ENCODE measurements at regions of chr7 and their contacts with region 1.

Region 1: DNA sequence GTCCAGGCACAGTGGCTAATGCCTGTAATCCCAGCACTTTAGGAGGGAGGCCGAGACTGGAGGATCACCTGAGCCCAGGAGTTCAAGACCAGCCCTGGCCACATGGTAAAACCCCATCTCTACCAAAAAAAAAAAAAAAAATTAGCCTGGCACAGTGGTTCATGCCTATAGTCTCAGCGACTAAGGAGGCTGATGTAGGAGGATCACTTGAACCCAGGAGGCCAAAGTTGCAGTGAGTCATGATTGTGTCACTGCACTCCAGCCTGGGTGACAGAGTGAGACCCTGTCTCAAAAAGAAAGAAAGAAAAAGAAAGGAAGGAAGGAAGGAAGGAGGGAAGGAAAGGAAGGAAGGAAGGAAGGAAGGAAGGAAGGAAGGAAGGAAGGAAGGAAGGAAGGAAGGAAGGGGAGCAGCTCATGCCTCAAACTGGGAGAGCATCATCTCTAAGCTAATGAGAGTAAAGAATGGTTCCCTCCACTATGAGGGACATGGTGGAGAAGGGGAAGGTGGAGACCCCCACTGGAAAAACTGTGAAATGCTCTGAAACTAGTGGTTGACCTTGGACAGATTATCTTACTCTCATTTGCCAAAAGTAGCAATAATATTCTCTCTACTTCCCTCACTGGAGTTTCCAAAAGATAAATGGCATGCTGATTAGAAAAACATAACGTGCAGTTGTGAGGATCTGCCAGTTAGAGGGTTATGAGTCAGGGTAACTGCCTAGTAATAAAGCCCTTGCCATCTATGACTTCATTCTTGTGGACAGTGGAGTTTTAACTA is 16.8 kb downstream of the GIMAP5 start:
- DNase-seq: peak in 1 of 9 donors; percentile 36
- ATAC-seq: no peak
- H3K4me3 ChIP-seq: no peak overlapping the region
- H3K4me3 Mint-ChIP-seq: peak overlapping the region; percentile 30 to 83 (median 68)
- H3K27ac ChIP-seq: peak overlapping the region; percentile 60
- H3K27ac Mint-ChIP-seq: peak overlapping the region; percentile 88 to 97 (median 95)
- H3K4me1 ChIP-seq: peaks cover 44 to 70% of the 10 kb centered on the region in 2 donors
- H3K4me1 Mint-ChIP-seq: peaks cover 36 to 81% (median 78%) of the 10 kb centered on the region in 7 donors
- H3K27me3 ChIP-seq: no peaks in the 10 kb centered on the region
- H3K27me3 Mint-ChIP-seq: peaks cover 0 to 2% (median 0%) of the 10 kb centered on the region in 5 donors

Region 2: GRCh38 chr7:150356265-150356897 is 397.6 kb before region 1 on chr7:
- CTCF ChIA-PET with region 1: no interaction called
- POLR2A ChIA-PET with region 1: interaction called, 6 read pairs
- intact Hi-C with region 1: loop called (anchors 1 kb)
- DNase-seq: peak in 7 of 9 donors; percentile 32 to 59 (median 53)
- ATAC-seq: peak; percentile 59
- H3K4me3 ChIP-seq: no peak overlapping the region
- H3K4me3 Mint-ChIP-seq: peak overlapping the region in 4 of 10 donors; percentile 12 to 32 (median 22)
- H3K27ac ChIP-seq: peak overlapping the region; percentile 51
- H3K27ac Mint-ChIP-seq: peak overlapping the region in 6 of 9 donors; percentile 32 to 77 (median 36)
- H3K4me1 ChIP-seq: peaks cover 6 to 28% of the 10 kb centered on the region in 2 donors
- H3K4me1 Mint-ChIP-seq: peaks cover 17 to 43% (median 41%) of the 10 kb centered on the region in 7 donors
- H3K27me3 ChIP-seq: no peaks in the 10 kb centered on the region
- H3K27me3 Mint-ChIP-seq: peaks cover 0 to 10% (median 0%) of the 10 kb centered on the region in 5 donors

Region 3: DNA sequence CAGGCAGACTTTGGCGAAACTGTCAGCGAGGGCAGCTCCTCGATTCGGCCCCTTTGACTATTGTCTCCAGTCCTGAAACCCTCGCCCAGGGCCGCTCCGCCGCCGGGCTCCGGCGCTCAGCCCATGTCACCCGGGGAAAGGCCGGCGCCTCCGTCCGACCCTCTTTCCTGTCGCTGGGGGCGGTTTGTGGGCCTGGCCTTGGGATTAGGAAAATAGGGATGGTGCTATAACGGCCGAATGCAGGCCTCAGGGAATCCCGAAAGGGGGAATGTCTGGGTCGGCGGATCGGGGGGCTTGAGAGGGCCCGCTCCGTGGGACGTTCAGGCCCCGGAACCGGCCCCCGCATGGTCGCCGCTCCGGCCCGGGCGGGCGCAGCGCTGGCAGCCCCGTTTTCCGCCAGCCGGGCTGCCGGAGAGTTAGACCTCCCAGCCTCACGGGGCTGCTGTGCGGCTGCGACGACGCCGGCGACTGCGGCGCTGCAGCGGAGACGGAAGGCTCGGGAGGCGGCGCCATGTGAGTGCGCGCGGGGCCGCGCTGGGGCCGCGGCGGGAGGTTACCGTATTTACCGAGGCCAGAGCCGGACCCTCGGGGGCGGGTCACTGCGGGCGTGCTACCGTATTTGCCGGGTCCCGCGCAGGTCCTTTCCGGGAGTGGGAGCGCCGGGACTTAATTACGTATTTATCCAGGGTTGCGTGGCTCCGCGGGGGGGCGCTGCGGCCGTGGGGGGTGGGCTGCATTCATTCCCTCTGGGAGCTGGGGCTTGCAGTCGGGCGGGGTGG is 349.0 kb before region 1 on chr7:
- CTCF ChIA-PET with region 1: interaction called, 4 read pairs
- POLR2A ChIA-PET with region 1: interaction called, 8 read pairs
- intact Hi-C with region 1: loop called in 1 of 2 experiments (anchors 1 kb)
- DNase-seq: peak; percentile 65 to 81 (median 74)
- ATAC-seq: peak; percentile 87
- H3K4me3 ChIP-seq: peak overlapping the region; percentile 83
- H3K4me3 Mint-ChIP-seq: peak overlapping the region; percentile 91 to 100 (median 96)
- H3K27ac ChIP-seq: peak overlapping the region; percentile 91
- H3K27ac Mint-ChIP-seq: peak overlapping the region; percentile 92 to 99 (median 96)
- H3K4me1 ChIP-seq: peaks cover 14 to 21% of the 10 kb centered on the region in 2 donors
- H3K4me1 Mint-ChIP-seq: peaks cover 30 to 42% (median 37%) of the 10 kb centered on the region in 7 donors
- H3K27me3 ChIP-seq: no peaks in the 10 kb centered on the region
- H3K27me3 Mint-ChIP-seq: no peaks in the 10 kb centered on the region

Region 4: DNA sequence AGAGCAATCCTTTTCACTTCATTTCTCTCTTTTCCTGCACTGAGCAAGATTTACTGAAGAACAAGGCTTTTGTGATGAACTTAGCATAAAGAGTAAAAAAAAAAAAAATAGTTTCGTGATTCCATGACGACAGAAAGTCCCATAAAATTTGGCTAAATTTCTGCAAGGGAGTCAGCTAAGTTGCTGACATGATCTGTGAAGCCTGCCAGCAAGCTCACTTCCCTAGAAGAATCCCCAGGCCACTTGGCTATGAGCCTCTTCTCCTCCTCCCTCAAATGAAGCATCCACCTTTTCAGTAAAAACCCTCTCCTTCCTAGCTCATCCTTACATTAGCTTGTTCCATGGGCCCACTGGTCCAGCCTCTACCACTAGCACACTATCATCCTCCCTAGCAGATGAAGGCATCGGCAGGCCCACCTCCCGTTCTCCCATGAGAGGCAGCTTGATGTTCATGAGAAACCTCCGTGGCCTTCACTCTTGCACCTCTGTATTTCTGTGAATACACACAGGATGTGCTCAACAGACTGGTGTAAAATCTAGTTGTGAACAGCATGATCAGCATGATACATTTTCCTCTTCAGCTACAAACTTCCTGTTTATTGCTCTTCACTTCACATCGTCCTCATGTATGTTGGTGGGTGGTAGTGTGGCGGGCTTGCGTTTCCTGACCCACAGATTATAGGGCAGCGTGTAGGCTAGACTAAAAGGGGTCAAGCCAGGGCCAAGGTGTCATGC is 272.7 kb before region 1 on chr7:
- CTCF ChIA-PET with region 1: interaction called, 4 read pairs
- POLR2A ChIA-PET with region 1: interaction called, 44 read pairs
- intact Hi-C with region 1: loop called in 1 of 2 experiments (anchors 1 kb)
- DNase-seq: peak in 8 of 9 donors; percentile 46 to 81 (median 71)
- ATAC-seq: peak; percentile 68
- H3K4me3 ChIP-seq: peak overlapping the region; percentile 12
- H3K4me3 Mint-ChIP-seq: peak overlapping the region; percentile 79 to 97 (median 90)
- H3K27ac ChIP-seq: peak overlapping the region; percentile 95
- H3K27ac Mint-ChIP-seq: peak overlapping the region; percentile 97 to 100 (median 100)
- H3K4me1 ChIP-seq: peaks cover 84 to 89% of the 10 kb centered on the region in 2 donors
- H3K4me1 Mint-ChIP-seq: peaks cover 58 to 99% (median 92%) of the 10 kb centered on the region in 7 donors
- H3K27me3 ChIP-seq: no peaks in the 10 kb centered on the region
- H3K27me3 Mint-ChIP-seq: no peaks in the 10 kb centered on the region

Region 5: GRCh38 chr7:150520145-150520544 is 233.9 kb before region 1 on chr7:
- CTCF ChIA-PET with region 1: interaction called, 7 read pairs
- POLR2A ChIA-PET with region 1: interaction called, 212 read pairs
- intact Hi-C with region 1: loop called in 1 of 2 experiments (anchors 1 kb)
- DNase-seq: peak in 4 of 9 donors; percentile 17 to 51 (median 42)
- ATAC-seq: peak; percentile 29
- H3K4me3 ChIP-seq: peak overlapping the region; percentile 59
- H3K4me3 Mint-ChIP-seq: peak overlapping the region; percentile 93 to 100 (median 99)
- H3K27ac ChIP-seq: peak overlapping the region; percentile 84
- H3K27ac Mint-ChIP-seq: peak overlapping the region; percentile 80 to 98 (median 94)
- H3K4me1 ChIP-seq: peaks cover 8 to 9% of the 10 kb centered on the region in 2 donors
- H3K4me1 Mint-ChIP-seq: peaks cover 22 to 42% (median 36%) of the 10 kb centered on the region in 7 donors
- H3K27me3 ChIP-seq: no peaks in the 10 kb centered on the region
- H3K27me3 Mint-ChIP-seq: no peaks in the 10 kb centered on the region

Region 6: DNA sequence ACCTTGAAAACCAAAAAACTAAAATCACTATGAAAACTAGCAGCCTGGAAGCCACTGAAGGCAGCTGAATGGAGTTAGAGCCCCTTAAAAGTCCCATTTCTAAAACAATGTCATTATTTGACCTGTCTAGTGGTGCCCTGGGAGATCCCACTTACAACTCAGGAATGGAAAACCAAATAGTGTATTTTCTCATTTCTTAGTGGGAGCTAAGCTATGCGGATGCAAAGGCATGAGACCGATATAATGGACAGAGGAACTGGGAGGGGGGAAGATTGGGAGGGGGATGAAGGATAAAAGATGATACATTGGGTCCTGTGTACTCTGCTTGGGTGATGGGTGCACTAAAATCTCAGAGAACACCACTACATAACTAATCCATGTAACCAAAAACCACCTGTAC is 78.3 kb before region 1 on chr7:
- CTCF ChIA-PET with region 1: interaction called, 4 read pairs
- POLR2A ChIA-PET with region 1: interaction called, 22 read pairs
- intact Hi-C with region 1: loop called in 1 of 2 experiments (anchors 2 kb)
- DNase-seq: no peak
- ATAC-seq: no peak
- H3K4me3 ChIP-seq: no peak overlapping the region
- H3K4me3 Mint-ChIP-seq: peak overlapping the region in 9 of 10 donors; percentile 34 to 93 (median 76)
- H3K27ac ChIP-seq: peak overlapping the region; percentile 71
- H3K27ac Mint-ChIP-seq: peak overlapping the region; percentile 82 to 98 (median 94)
- H3K4me1 ChIP-seq: peaks cover 38 to 52% of the 10 kb centered on the region in 2 donors
- H3K4me1 Mint-ChIP-seq: peaks cover 43 to 88% (median 78%) of the 10 kb centered on the region in 7 donors
- H3K27me3 ChIP-seq: no peaks in the 10 kb centered on the region
- H3K27me3 Mint-ChIP-seq: no peaks in the 10 kb centered on the region

Region 7: GRCh38 chr7:150716368-150716767 is 37.6 kb before region 1 on chr7 and contains the start of gene GIMAP1:
- CTCF ChIA-PET with region 1: interaction called, 21 read pairs
- POLR2A ChIA-PET with region 1: interaction called, 267 read pairs
- intact Hi-C with region 1: loop called (anchors 1 kb)
- DNase-seq: peak in 8 of 9 donors; percentile 14 to 85 (median 81)
- ATAC-seq: peak; percentile 90
- H3K4me3 ChIP-seq: peak within 1 kb of the TSS; percentile 88
- H3K4me3 Mint-ChIP-seq: peak within 1 kb of the TSS; percentile 89 to 100 (median 98)
- H3K27ac ChIP-seq: peak within 1 kb of the TSS; percentile 86
- H3K27ac Mint-ChIP-seq: peak within 1 kb of the TSS; percentile 76 to 98 (median 95)
- H3K4me1 ChIP-seq: peaks cover 39 to 46% of the 10 kb centered on the region in 2 donors
- H3K4me1 Mint-ChIP-seq: peaks cover 38 to 77% (median 61%) of the 10 kb centered on the region in 7 donors
- H3K27me3 ChIP-seq: no peaks in the 10 kb centered on the region
- H3K27me3 Mint-ChIP-seq: no peaks in the 10 kb centered on the region
- total RNA-seq, gene GIMAP1: 23.3 to 124 (median 32.6) TPM